K562 (cell line): ENCODE measurements at regions of chr1 and their contacts with region 1.

Region 1: GRCh38 chr1:119275145-119276134 is 93.1 kb upstream of the HAO2 start:
- DNase-seq: peak; percentile 53 to 68 (median 60)
- ATAC-seq: peak; percentile 97
- H3K4me3 ChIP-seq: no peak overlapping the region
- H3K27ac ChIP-seq: no peak overlapping the region
- H3K4me1 ChIP-seq: no peaks in the 10 kb centered on the region
- H3K27me3 ChIP-seq: no peaks in the 10 kb centered on the region
- CTCF ChIP-seq: peak; percentile 71 to 89 (median 83)
- EP300 ChIP-seq: no peak
- POLR2A ChIP-seq: no peak
- RAD21 ChIP-seq: peak; percentile 30 to 63; a peak in 3 of 4 replicates

Region 2: GRCh38 chr1:118842452-118843201 is 432.8 kb before region 1 on chr1:
- CTCF ChIA-PET with region 1: no interaction called
- POLR2A ChIA-PET with region 1: no interaction called
- in situ Hi-C with region 1: no loop called
- intact Hi-C with region 1: loop called (anchors 10 kb)
- DNase-seq: no peak
- ATAC-seq: no peak
- H3K4me3 ChIP-seq: no peak overlapping the region
- H3K27ac ChIP-seq: no peak overlapping the region
- H3K4me1 ChIP-seq: no peaks in the 10 kb centered on the region
- H3K27me3 ChIP-seq: no peaks in the 10 kb centered on the region
- CTCF ChIP-seq: no peak
- EP300 ChIP-seq: no peak
- POLR2A ChIP-seq: no peak
- RAD21 ChIP-seq: no peak

Region 3: GRCh38 chr1:119140177-119141019 is 135.0 kb before region 1 on chr1 and contains the start of gene WARS2:
- CTCF ChIA-PET with region 1: no interaction called
- POLR2A ChIA-PET with region 1: interaction called, 6 read pairs
- in situ Hi-C with region 1: no loop called
- intact Hi-C with region 1: loop called (anchors 1 kb)
- DNase-seq: peak; percentile 92 to 99 (median 92)
- ATAC-seq: peak; percentile 98
- H3K4me3 ChIP-seq: peak within 1 kb of the TSS; percentile 54
- H3K27ac ChIP-seq: peak within 1 kb of the TSS; percentile 92
- H3K4me1 ChIP-seq: peaks cover 0 to 6% of the 10 kb centered on the region in 2 experiments; a peak in 2 of 5 replicates
- H3K27me3 ChIP-seq: no peaks in the 10 kb centered on the region
- CTCF ChIP-seq: peak in 1 of 3 experiments; percentile 28; a peak in 3 of 6 replicates
- EP300 ChIP-seq: peak; percentile 44; the same call in 1 of the 2 replicates
- POLR2A ChIP-seq: peak; percentile 98
- RAD21 ChIP-seq: peak in 1 of 2 experiments; percentile 26; a peak in 1 of 4 replicates
- polyA plus RNA-seq, gene WARS2: 5.7 to 6.7 TPM

Region 4: DNA sequence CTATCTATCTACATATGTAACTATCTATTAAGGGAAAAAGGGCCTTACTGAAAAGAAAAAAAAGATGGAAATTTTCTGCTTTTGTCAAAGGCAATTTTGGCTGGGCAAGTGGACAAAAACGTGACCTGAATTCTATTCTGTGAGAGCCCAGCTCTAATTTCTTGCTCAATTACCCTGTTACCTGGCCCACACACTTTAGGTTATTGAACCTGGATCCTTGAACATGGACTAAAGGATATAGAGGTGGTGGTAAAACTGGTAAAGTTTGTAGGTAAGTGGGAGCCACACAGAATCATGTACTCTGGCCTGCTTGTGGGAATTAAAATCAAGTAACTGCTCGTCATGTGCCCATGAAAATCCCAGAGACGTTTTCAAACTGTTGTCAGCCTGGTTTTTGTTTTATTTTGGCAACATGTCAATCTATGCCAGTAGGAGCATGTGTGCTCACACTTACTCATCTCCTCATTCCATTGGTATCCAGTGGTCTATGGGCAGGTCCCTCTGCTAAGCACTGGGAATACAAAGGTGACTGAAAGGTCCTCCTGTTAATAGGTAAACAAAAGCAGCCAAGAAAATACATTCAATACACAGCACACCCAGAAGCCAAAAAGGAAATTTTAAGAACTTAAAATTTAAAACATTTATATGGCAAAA is 21.2 kb before region 1 on chr1:
- CTCF ChIA-PET with region 1: no interaction called
- POLR2A ChIA-PET with region 1: no interaction called
- in situ Hi-C with region 1: no loop called
- intact Hi-C with region 1: no loop called
- DNase-seq: no peak
- ATAC-seq: no peak
- H3K4me3 ChIP-seq: no peak overlapping the region
- H3K27ac ChIP-seq: no peak overlapping the region
- H3K4me1 ChIP-seq: no peaks in the 10 kb centered on the region
- H3K27me3 ChIP-seq: no peaks in the 10 kb centered on the region
- CTCF ChIP-seq: no peak
- EP300 ChIP-seq: no peak
- POLR2A ChIP-seq: no peak
- RAD21 ChIP-seq: no peak

Region 5: DNA sequence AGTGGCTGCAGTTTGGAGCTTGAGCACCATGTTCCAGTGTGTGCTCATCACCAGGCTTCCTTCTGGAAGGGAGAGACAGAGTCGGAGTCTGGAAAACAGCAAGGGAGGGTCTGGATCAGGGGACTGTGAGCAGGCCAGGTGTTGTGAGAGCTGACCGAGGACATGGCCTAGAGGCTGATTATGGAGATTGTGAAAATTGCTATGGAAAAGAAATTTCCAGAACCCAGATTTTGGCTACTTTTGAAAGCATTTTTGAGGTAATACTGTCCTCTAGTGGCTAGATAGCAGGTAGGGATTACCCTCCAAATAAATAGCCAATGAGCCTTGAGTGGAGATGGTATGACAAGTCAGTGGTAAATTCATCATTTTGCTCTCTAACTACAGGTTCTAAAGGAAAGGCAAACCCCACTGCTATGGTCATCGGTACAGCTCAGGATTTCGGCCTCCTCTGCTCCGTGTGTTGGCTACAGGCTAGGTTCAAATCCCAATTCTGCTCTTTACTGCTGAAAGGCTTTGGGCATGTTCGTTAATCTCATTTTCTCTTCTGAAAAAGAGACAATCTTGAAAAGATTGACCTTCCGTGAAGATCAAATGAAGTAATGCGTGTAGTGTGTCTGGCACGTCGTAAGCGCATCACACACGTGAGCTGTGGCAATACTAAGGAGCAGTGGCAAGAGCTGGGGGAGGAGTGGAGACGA is 92.1 kb after region 1 on chr1:
- CTCF ChIA-PET with region 1: interaction called, 3 read pairs
- POLR2A ChIA-PET with region 1: interaction called, 3 read pairs
- in situ Hi-C with region 1: no loop called
- intact Hi-C with region 1: loop called (anchors 1 kb)
- DNase-seq: peak; percentile 27 to 59 (median 40)
- ATAC-seq: peak; percentile 85
- H3K4me3 ChIP-seq: no peak overlapping the region
- H3K27ac ChIP-seq: no peak overlapping the region
- H3K4me1 ChIP-seq: no peaks in the 10 kb centered on the region
- H3K27me3 ChIP-seq: peaks cover 9% of the 10 kb centered on the region in 2 experiments; a peak in 3 of 5 replicates
- CTCF ChIP-seq: peak; percentile 67 to 96 (median 87)
- EP300 ChIP-seq: no peak
- POLR2A ChIP-seq: no peak
- RAD21 ChIP-seq: peak; percentile 93 to 96